HCT116 (cell line): ENCODE measurements at regions of chr4 and their contacts with region 1.

Region 1: DNA sequence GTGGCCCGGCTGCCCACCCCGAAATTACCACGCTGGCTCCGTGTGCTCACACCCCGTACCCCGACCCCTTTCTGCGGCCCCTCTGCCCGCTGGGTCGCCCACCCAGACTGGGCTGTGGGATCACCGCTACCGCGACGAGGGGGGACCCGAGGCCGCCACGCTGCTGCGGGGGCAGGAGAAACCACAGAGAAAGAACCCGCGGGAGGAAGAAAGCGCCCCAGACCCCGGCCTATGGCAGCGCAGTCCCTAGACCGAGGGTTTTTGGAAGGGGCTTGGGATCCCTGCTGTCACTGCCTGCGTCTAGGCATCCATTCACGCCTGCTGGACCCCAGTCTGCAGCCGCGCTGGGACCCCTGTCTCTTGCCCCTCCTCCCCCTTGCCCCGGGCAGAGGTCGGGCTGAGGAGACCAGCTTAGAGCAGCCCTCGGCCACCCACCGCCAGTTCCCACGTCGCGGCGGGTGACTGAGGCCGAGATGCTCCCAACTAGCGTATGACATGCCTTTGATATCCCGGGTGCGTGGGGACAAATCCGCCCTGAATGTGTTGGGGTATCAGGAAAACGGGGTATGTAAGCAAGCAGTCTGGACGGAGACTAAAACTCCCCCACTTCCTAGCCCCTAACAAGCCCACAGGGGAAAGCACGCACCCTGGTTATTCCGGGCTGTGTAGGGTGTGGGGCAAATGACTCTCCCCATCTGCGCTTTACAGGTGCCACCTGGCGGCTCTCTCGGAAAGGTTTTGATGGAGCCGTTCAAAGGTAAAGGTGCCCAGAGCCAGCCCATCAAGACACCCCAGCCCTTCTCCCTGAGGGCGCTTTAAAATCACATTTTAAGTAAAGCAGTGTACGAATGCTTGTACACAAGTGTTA is 862 bp upstream of the INPP4B start:
- DNase-seq: peak; percentile 57
- ATAC-seq: peak; percentile 81
- H3K4me3 ChIP-seq: peak overlapping the region; percentile 63 to 69
- H3K27ac ChIP-seq: peak overlapping the region; percentile 65; the same call in 1 of the 2 replicates
- H3K4me1 ChIP-seq: peaks cover 10 to 25% of the 10 kb centered on the region in 2 experiments
- H3K27me3 ChIP-seq: no peaks in the 10 kb centered on the region
- CTCF ChIP-seq: peak; percentile 68 to 72 (median 69); a peak in 5 of 6 replicates
- POLR2A ChIP-seq: no peak
- RAD21 ChIP-seq: peak; percentile 95

Region 2: GRCh38 chr4:141158219-141158618 is 1688.7 kb before region 1 on chr4:
- CTCF ChIA-PET with region 1: interaction called, 3 read pairs
- POLR2A ChIA-PET with region 1: no interaction called
- RAD21 ChIA-PET with region 1: no interaction called
- intact Hi-C with region 1: loop called (anchors 5 kb)
- DNase-seq: peak; percentile 33
- ATAC-seq: no peak
- H3K4me3 ChIP-seq: no peak overlapping the region
- H3K27ac ChIP-seq: no peak overlapping the region
- H3K4me1 ChIP-seq: no peaks in the 10 kb centered on the region
- H3K27me3 ChIP-seq: no peaks in the 10 kb centered on the region
- CTCF ChIP-seq: peak; percentile 23 to 67 (median 43); a peak in 4 of 6 replicates
- POLR2A ChIP-seq: no peak
- RAD21 ChIP-seq: peak; percentile 71

Region 3: DNA sequence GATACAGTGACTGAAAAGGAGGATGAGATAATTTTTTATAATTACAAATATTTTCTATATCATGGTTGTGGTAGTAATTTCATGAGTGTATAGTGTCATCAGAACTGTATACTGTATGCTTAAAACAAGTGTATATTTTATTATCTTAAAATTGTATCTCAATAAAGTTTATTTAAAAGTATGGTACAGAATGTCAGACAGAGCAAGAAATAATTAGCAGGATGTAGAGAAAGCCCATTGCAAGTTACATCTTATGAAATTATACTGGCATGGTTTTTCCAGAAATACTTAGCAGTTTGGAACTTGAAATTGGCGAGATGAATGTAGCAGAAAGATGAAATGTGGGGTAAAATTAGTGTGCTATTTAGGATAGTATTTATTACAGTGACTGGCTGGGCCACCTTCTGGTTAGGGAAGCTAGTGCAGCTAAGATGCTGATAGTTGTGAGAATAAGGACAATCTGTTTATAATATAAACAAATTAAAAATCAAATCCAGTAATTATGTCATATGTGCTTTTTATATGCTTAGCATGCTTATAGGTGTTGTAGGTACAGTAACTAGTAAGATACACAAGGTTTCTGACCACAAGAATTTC is 1135.9 kb before region 1 on chr4:
- CTCF ChIA-PET with region 1: no interaction called
- POLR2A ChIA-PET with region 1: no interaction called
- RAD21 ChIA-PET with region 1: no interaction called
- intact Hi-C with region 1: loop called (anchors 10 kb)
- DNase-seq: no peak
- ATAC-seq: 0 out of 2 replicates have a peak, but pooled peaks have one; percentile 43
- H3K4me3 ChIP-seq: no peak overlapping the region
- H3K27ac ChIP-seq: no peak overlapping the region
- H3K4me1 ChIP-seq: peaks cover 19 to 21% of the 10 kb centered on the region in 2 experiments
- H3K27me3 ChIP-seq: no peaks in the 10 kb centered on the region
- CTCF ChIP-seq: peak; percentile 39 to 64 (median 64); a peak in 5 of 6 replicates
- POLR2A ChIP-seq: no peak
- RAD21 ChIP-seq: peak; percentile 58

Region 4: DNA sequence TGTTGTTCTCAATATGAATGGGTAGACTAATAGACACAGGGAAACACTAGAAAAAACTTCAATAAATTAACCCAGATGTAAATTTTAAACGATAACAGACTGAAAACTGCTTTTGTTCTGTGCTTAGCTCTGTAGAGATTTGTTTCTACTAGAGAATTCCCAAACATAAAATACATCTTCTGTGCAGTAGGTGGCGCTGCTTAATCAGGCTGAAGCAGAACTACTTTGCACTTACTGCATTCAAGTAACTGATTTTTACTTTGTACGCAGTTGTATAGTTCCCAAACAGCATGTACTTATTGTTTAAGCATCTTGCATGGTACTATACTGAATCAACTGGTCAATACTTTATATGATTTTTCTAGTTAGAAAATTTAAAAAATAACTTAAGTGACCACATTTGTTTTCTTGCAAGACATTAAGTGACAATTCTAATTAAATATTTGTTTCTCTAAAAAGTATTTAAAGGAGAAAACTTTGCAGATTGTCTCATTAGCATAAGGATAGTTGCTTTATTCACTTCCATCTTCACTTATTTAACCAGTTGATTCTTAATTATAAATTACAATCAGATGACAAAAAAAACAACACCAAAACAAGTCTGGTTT is 720.0 kb before region 1 on chr4:
- CTCF ChIA-PET with region 1: interaction called, 10 read pairs
- POLR2A ChIA-PET with region 1: no interaction called
- RAD21 ChIA-PET with region 1: no interaction called
- intact Hi-C with region 1: loop called (anchors 1 kb)
- DNase-seq: peak; percentile 66
- ATAC-seq: peak; percentile 77
- H3K4me3 ChIP-seq: no peak overlapping the region
- H3K27ac ChIP-seq: no peak overlapping the region; the same call in 1 of the 2 replicates
- H3K4me1 ChIP-seq: 0 out of 4 replicates have a peak, but pooled peaks cover 0 to 3% of the 10 kb centered on the region in 2 experiments
- H3K27me3 ChIP-seq: no peaks in the 10 kb centered on the region
- CTCF ChIP-seq: peak; percentile 59 to 87 (median 63); a peak in 5 of 6 replicates
- POLR2A ChIP-seq: no peak
- RAD21 ChIP-seq: peak; percentile 93

Region 5: DNA sequence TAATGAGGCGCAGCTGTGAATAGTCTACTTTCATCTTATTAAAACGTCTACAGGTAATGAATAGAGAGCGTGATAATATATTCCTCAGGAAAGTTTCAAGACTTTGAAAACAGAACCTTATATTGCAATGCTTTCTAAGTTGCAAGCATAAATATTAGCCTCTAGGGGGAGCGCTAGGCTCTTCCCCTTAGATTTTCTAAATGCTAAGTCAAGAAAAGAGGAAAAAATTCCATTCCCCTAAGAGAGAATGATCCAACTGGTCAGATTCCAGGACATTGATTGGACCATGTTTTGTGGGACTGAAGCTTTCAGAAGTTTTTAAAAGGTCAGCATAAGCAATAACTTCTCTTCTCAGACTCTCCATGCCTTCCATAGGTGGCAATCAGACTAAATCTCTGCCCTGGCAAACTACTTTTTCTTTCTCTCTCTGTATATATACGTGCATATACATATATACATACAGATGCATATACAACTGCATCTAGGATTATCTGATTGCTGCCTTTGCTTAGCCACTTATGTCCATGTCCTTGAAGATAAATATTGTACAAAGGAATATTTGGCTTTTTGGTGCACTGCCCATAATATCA is 493.7 kb before region 1 on chr4:
- CTCF ChIA-PET with region 1: interaction called, 3 read pairs
- POLR2A ChIA-PET with region 1: no interaction called
- RAD21 ChIA-PET with region 1: no interaction called
- intact Hi-C with region 1: loop called (anchors 2 kb)
- DNase-seq: peak; percentile 69
- ATAC-seq: peak; percentile 70
- H3K4me3 ChIP-seq: no peak overlapping the region
- H3K27ac ChIP-seq: peak overlapping the region; percentile 21; the same call in 1 of the 2 replicates
- H3K4me1 ChIP-seq: peaks cover 31 to 35% of the 10 kb centered on the region in 2 experiments
- H3K27me3 ChIP-seq: no peaks in the 10 kb centered on the region
- CTCF ChIP-seq: peak; percentile 67 to 93 (median 77)
- POLR2A ChIP-seq: no peak
- RAD21 ChIP-seq: peak; percentile 87